ENCODE measurements at regions of chr6 and their contacts with region 1.

Region 1: DNA sequence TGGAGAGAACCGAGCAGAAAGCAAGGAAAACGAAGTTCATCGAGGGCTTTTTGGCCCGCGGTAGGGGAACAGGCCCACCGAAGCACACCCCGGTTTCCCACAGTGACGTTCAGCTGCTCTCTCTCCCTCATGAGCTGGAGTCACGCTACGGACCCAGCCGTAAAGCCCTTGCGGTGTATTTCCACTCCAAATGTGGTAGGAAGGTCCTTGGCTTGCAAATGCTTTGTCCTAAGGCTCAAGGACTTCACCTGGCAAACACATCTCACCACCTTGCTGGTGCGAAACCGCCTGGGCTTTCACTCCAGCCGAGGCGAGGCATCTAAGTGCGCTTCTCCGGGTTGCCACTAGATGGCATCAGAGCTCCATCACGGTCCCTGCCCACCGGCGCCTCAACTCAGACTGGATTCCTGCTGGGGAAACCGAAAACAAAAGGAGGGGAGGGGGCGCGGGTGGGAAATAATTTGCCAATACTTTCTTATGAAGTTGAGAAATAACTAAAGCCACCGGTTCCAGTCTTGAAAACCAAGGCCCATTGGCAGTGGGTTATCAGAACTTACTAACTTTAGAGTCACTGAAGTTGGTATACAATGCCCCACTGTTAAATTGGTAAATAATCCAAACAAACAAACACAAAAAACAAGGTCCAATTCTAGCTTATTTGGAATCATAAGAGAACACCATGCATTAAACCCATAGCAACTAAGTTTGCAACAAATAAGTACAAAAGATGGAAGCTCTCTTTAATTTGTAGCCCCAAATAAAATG is 13.4 kb upstream of the FOXC1 start:
- DNase-seq: peak; percentile 50
- ATAC-seq: peak; percentile 83
- H3K4me3 ChIP-seq: peak overlapping the region in 2 of 3 experiments; percentile 6 to 44; a peak in 2 of 6 replicates
- H3K27ac ChIP-seq: no peak overlapping the region
- H3K4me1 ChIP-seq: peaks cover 49% of the 10 kb centered on the region
- H3K27me3 ChIP-seq: peaks cover 11 to 83% of the 10 kb centered on the region in 2 experiments; a peak in 4 of 5 replicates
- CTCF ChIP-seq: peak; percentile 99
- EP300 ChIP-seq: no peak
- POLR2A ChIP-seq: no peak
- RAD21 ChIP-seq: peak; percentile 95

Region 2: GRCh38 chr6:1574083-1574761 is 22.0 kb before region 1 on chr6:
- CTCF ChIA-PET with region 1: no interaction called
- POLR2A ChIA-PET with region 1: no interaction called
- in situ Hi-C with region 1: no loop called
- intact Hi-C with region 1: no loop called
- DNase-seq: no peak
- ATAC-seq: no peak
- H3K4me3 ChIP-seq: no peak overlapping the region
- H3K27ac ChIP-seq: no peak overlapping the region
- H3K4me1 ChIP-seq: peaks cover 18% of the 10 kb centered on the region
- H3K27me3 ChIP-seq: peaks cover 5 to 53% of the 10 kb centered on the region in 2 experiments
- CTCF ChIP-seq: no peak
- EP300 ChIP-seq: no peak
- POLR2A ChIP-seq: no peak
- RAD21 ChIP-seq: no peak

Region 3: GRCh38 chr6:1636971-1637871 is 41.0 kb after region 1 on chr6:
- CTCF ChIA-PET with region 1: no interaction called
- POLR2A ChIA-PET with region 1: no interaction called
- in situ Hi-C with region 1: no loop called
- intact Hi-C with region 1: no loop called
- DNase-seq: no peak
- ATAC-seq: peak; percentile 40
- H3K4me3 ChIP-seq: no peak overlapping the region
- H3K27ac ChIP-seq: no peak overlapping the region
- H3K4me1 ChIP-seq: no peaks in the 10 kb centered on the region
- H3K27me3 ChIP-seq: no peaks in the 10 kb centered on the region
- CTCF ChIP-seq: no peak
- EP300 ChIP-seq: no peak
- POLR2A ChIP-seq: no peak
- RAD21 ChIP-seq: no peak

Region 4: DNA sequence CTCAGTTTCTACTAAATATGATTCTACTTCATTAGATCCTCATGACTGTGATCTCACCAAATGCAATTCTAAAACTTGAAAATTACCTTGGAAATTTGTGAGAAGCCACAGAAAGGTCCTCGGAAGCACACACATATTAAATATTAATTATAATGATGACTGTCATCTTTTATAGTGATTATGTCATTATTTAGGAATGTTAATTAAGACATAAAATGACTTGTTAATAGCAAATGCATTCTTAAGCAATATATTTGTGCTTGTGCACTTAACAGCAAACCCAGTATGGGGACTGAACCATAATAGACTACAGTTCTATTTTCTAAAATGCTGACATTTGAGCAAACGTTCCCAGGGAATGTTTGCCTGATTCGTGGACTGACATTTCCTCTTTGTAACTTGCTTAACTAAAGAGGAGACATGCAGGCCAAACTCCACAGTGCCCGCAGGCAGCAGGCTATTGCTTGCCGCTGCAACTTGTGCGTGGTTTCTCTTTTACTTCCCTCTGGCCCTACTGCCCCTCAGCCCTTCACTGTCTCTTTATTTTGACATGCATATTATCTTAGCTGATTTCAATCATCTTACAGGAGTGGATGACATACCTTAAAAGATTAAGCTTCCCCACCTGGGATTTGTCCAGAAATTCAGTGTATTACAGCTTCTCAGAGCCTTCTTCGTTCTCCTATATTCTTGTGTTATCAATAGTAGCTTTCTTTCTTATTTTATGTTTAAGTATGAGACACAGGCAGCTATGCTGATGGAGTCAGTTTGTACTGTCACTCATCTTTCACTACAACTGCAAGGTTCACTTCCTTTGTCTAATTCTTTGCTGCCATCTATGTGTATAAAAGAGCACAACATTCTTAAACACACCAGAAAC is 507.6 kb after region 1 on chr6:
- CTCF ChIA-PET with region 1: interaction called, 7 read pairs
- POLR2A ChIA-PET with region 1: no interaction called
- in situ Hi-C with region 1: no loop called
- intact Hi-C with region 1: loop called (anchors 2 kb)
- DNase-seq: peak; percentile 43
- ATAC-seq: peak; percentile 69
- H3K4me3 ChIP-seq: no peak overlapping the region
- H3K27ac ChIP-seq: no peak overlapping the region
- H3K4me1 ChIP-seq: peaks cover 5% of the 10 kb centered on the region
- H3K27me3 ChIP-seq: no peaks in the 10 kb centered on the region
- CTCF ChIP-seq: peak; percentile 75
- EP300 ChIP-seq: no peak
- POLR2A ChIP-seq: no peak
- RAD21 ChIP-seq: no peak

Region 5: DNA sequence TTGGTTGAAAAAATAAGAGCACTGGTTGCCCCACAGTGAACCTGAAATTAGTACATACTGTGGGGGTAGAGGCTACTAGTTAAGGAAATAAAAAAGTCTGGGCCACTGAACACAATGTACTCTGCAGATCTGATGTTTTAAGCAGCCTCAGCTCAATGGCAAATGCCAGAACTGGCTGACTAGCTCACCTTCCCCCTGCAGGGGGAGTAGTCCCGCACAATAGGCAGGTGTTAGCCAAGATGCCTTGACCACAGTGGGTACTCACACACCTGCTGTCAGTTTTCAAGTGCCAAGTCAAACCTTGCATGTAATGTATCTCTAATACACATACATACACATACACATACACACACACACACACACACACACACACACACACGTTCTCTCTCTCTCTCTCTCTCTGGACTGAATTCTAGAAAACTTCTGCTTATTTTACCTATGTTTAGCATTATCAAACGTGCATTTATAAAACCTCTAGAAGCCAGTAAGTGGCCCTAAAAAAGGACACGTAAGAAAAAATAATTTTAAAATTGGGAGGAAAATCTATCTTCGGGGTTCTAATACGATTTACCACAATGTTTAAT is 613.0 kb after region 1 on chr6:
- CTCF ChIA-PET with region 1: no interaction called
- POLR2A ChIA-PET with region 1: no interaction called
- in situ Hi-C with region 1: loop called (anchors 5 kb)
- intact Hi-C with region 1: no loop called
- DNase-seq: peak; percentile 72
- ATAC-seq: peak; percentile 99
- H3K4me3 ChIP-seq: no peak overlapping the region
- H3K27ac ChIP-seq: no peak overlapping the region
- H3K4me1 ChIP-seq: peaks cover 36% of the 10 kb centered on the region; the same call in 1 of the 2 replicates
- H3K27me3 ChIP-seq: no peaks in the 10 kb centered on the region
- CTCF ChIP-seq: peak; percentile 88
- EP300 ChIP-seq: 0 out of 4 replicates have a peak, but pooled peaks of 1 of the 2 experiments have one; percentile 12
- POLR2A ChIP-seq: no peak
- RAD21 ChIP-seq: peak; percentile 85

Region 6: DNA sequence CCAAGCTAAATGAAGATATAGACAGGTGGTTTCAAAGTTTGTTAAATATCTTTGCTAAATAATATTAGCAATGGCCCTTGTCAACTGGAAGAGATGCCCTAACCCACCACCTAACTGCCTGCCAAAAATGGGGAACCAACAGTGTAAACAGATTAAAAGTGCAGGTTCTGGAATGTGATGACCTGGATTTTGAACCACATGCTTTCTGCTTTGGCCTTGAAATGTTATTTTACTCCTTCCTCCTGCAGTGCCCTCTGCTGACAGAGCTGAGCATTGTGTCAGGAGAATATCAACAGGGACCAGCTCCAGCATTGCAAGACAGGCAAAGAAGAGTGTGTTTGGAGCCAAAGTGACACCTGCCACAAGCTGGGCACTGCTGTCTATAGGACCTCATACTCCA is 927.8 kb after region 1 on chr6:
- CTCF ChIA-PET with region 1: interaction called, 10 read pairs
- POLR2A ChIA-PET with region 1: no interaction called
- in situ Hi-C with region 1: no loop called
- intact Hi-C with region 1: loop called (anchors 1 kb)
- DNase-seq: peak; percentile 82
- ATAC-seq: peak; percentile 85
- H3K4me3 ChIP-seq: no peak overlapping the region
- H3K27ac ChIP-seq: no peak overlapping the region
- H3K4me1 ChIP-seq: peaks cover 7% of the 10 kb centered on the region; the same call in 1 of the 2 replicates
- H3K27me3 ChIP-seq: no peaks in the 10 kb centered on the region
- CTCF ChIP-seq: peak; percentile 87
- EP300 ChIP-seq: peak in 1 of 2 experiments; percentile 46; a peak in 1 of 4 replicates
- POLR2A ChIP-seq: no peak
- RAD21 ChIP-seq: peak; percentile 59; the same call in 1 of the 2 replicates

Region 7: DNA sequence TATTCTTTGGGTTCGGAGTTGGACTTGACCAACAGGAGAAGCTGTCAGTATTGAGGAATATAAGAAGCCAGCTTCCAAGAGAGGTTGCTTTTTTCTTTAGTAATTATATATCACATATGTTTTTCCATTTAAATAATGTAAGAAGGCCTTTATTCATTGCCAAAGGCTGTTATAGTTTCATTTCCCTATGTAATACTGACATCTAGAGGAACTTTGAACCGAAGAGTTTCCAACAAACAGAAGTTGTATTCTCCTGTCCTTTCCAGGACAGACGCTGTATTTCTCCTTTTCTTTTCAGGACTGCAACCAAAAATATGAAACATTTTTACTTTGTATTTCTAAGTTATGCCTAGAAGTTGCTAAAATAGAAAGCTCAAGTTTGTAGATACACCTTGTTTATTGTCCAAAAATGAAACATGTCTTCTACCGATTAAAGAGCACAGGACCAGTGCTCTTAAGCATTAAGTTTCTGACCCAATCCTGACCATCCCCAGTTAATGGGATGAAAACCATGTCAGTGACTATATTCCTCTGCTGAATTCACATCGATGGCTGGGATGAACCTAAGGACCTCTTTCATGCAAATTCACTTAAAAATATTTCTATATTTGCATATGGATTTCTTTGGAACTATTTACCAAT is 1099.3 kb after region 1 on chr6:
- CTCF ChIA-PET with region 1: no interaction called
- POLR2A ChIA-PET with region 1: no interaction called
- in situ Hi-C with region 1: no loop called
- intact Hi-C with region 1: loop called (anchors 5 kb)
- DNase-seq: peak; percentile 27
- ATAC-seq: peak; percentile 72
- H3K4me3 ChIP-seq: no peak overlapping the region
- H3K27ac ChIP-seq: no peak overlapping the region
- H3K4me1 ChIP-seq: peaks cover 13% of the 10 kb centered on the region
- H3K27me3 ChIP-seq: peaks cover 0 to 20% of the 10 kb centered on the region in 2 experiments; a peak in 2 of 5 replicates
- CTCF ChIP-seq: peak; percentile 75
- EP300 ChIP-seq: no peak
- POLR2A ChIP-seq: no peak
- RAD21 ChIP-seq: peak; percentile 41; the same call in 1 of the 2 replicates

Region 8: DNA sequence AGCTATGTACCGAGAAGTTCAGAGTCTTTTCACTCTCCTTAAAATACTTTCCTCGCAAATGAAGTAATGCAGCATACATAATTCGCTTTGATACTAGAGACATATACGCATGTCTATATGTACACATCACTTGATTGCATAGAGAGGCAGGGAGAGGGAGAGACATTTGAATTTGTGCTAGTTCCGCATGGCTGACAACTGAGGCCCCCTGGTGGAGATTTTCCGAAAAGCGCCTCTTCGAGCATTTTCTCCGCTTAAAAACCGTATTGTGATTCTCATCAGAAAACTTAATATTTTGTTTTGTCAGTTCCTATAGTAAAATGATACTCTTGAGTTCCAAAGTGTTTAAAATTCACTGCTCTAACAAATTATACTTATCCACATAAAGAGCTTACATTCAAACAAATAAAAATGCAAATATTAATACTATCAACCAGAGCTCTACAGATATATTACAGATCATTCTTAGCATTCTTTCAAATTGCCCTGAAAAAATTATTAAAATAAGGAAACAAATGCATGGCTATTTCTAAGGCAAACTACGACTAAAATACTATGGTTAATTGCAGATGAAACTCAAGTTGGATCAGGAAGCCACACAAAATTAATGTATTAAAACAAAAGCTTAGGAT is 1153.8 kb after region 1 on chr6:
- CTCF ChIA-PET with region 1: interaction called, 6 read pairs
- POLR2A ChIA-PET with region 1: no interaction called
- in situ Hi-C with region 1: loop called (anchors 5 kb)
- intact Hi-C with region 1: no loop called
- DNase-seq: peak; percentile 46
- ATAC-seq: peak; percentile 67
- H3K4me3 ChIP-seq: no peak overlapping the region
- H3K27ac ChIP-seq: no peak overlapping the region
- H3K4me1 ChIP-seq: peaks cover 29% of the 10 kb centered on the region
- H3K27me3 ChIP-seq: peaks cover 2 to 6% of the 10 kb centered on the region in 2 experiments; a peak in 2 of 5 replicates
- CTCF ChIP-seq: peak; percentile 77
- EP300 ChIP-seq: no peak
- POLR2A ChIP-seq: no peak
- RAD21 ChIP-seq: peak; percentile 27; the same call in 1 of the 2 replicates